A549 (cell line): ENCODE measurements at regions of chr1 and their contacts with region 1.

Region 1: GRCh38 chr1:3564921-3565827 is 46.1 kb downstream of the MEGF6 start:
- DNase-seq: peak in 1 of 2 experiments; percentile 73
- ATAC-seq: peak in 1 of 2 experiments; percentile 80; a peak in 3 of 6 replicates
- H3K4me3 ChIP-seq: no peak overlapping the region
- H3K27ac ChIP-seq: no peak overlapping the region
- H3K4me1 ChIP-seq: no peaks in the 10 kb centered on the region
- CTCF ChIP-seq: peak; percentile 72
- EP300 ChIP-seq: no peak
- POLR2A ChIP-seq: no peak
- RAD21 ChIP-seq: peak; percentile 84 to 85

Region 2: GRCh38 chr1:3213725-3214124 is 351.4 kb before region 1 on chr1:
- CTCF ChIA-PET with region 1: no interaction called
- POLR2A ChIA-PET with region 1: no interaction called
- DNase-seq: no peak
- ATAC-seq: no peak
- H3K4me3 ChIP-seq: no peak overlapping the region
- H3K27ac ChIP-seq: no peak overlapping the region
- H3K4me1 ChIP-seq: no peaks in the 10 kb centered on the region
- CTCF ChIP-seq: no peak
- EP300 ChIP-seq: no peak
- POLR2A ChIP-seq: no peak
- RAD21 ChIP-seq: no peak

Region 3: GRCh38 chr1:3553166-3553939 is 11.8 kb before region 1 on chr1:
- CTCF ChIA-PET with region 1: interaction called, 22 read pairs
- POLR2A ChIA-PET with region 1: no interaction called
- DNase-seq: no peak
- ATAC-seq: no peak; a peak in 1 of 6 replicates
- H3K4me3 ChIP-seq: no peak overlapping the region
- H3K27ac ChIP-seq: 0 out of 6 replicates have a peak overlapping the region, but pooled peaks of 1 of the 2 experiments have one; percentile 24
- H3K4me1 ChIP-seq: peaks cover 2% of the 10 kb centered on the region; the same call in 2 of the 3 replicates
- CTCF ChIP-seq: no peak
- EP300 ChIP-seq: no peak
- POLR2A ChIP-seq: no peak
- RAD21 ChIP-seq: no peak

Region 4: GRCh38 chr1:3586932-3587678 is 21.9 kb after region 1 on chr1:
- CTCF ChIA-PET with region 1: interaction called, 12 read pairs
- POLR2A ChIA-PET with region 1: no interaction called
- DNase-seq: peak; percentile 21 to 45
- ATAC-seq: peak; percentile 79 to 90
- H3K4me3 ChIP-seq: no peak overlapping the region
- H3K27ac ChIP-seq: peak overlapping the region in 1 of 2 experiments; percentile 74; a peak in 3 of 6 replicates
- H3K4me1 ChIP-seq: peaks cover 9% of the 10 kb centered on the region; the same call in 2 of the 3 replicates
- CTCF ChIP-seq: no peak
- EP300 ChIP-seq: no peak
- POLR2A ChIP-seq: no peak
- RAD21 ChIP-seq: no peak